H1 (cell line): ENCODE measurements at regions of chr10 and their contacts with region 1.

Region 1: DNA sequence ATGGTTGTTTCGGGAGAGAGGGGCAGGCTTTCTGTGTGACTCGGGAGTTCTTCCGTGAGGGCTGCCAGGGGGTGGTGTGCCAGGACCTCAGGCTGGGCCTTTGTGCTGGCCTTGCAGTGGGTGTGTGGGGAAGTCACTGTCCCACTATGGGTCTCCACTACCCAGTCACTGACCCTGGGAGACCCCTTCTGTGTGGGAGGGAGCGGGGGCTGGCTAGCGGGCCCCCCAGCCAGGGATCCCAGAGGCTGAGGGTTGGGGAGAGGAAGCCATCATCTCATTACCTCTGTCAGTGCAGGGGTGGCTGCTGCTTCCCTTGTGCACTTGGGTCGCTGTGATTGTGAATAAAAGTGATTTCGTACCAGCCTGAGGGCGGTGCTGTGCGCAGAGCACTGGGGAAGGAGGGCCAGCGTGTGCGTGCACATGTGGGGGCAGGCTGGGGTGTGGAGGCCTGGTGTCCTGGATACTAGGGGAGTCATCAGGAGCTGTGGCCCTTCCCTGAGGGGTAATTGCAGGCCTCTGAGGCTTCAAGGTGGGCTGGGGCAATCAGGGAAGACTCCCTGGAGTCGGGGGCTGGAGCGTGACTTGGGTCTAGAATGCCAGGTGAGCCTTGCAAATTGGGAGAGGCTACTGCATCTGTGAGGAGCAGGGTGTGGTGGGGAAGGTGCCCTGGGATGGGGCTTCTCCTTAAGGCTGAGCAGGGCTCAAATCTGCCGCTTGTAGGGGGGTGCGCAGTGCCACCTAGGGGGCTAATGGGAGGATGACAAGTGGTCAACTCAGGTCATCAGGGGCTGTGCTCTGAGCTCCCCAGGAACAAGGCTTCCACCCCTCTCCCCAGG is 98.9 kb downstream of the NEURL1 start:
- DNase-seq: peak; percentile 46 to 87
- H3K4me3 ChIP-seq: no peak overlapping the region
- H3K27ac ChIP-seq: no peak overlapping the region
- H3K4me1 ChIP-seq: peaks cover 0 to 2% (median 0%) of the 10 kb centered on the region in 4 experiments; a peak in 1 of 7 replicates
- H3K27me3 ChIP-seq: no peaks in the 10 kb centered on the region; a peak in 2 of 7 replicates
- CTCF ChIP-seq: peak; percentile 84 to 93 (median 88)
- EP300 ChIP-seq: no peak
- POLR2A ChIP-seq: no peak
- RAD21 ChIP-seq: peak; percentile 78 to 88

Region 2: DNA sequence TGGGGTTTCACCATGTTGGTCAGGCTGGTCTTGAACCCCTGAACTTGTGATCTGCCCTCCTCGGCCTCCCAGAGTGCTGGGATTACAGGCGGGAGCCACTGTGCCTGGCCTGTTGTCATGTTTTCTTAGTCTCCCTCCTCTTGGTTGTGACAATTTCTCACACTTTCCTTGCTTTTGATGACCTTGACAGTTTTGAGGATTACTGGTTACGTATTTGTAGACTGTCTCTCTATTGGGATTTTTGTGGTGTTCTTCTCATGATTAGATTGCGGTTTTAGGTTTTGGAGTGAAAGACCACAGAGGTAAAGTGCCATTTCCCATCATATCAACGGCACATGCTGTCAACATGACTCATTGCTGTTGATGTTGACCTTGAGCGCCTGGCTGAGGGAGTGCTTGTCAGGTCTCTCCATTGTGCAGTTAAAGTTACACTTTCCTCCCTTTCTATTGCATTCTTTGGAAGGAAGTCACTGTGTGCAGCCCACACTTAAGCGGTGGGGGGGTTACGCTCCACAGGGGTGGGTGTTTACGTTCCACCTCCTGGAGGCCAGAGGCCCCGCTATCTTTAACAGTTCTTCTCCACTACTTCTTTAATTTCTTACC is 88.1 kb before region 1 on chr10:
- CTCF ChIA-PET with region 1: interaction called, 13 read pairs
- POLR2A ChIA-PET with region 1: no interaction called
- DNase-seq: no peak
- H3K4me3 ChIP-seq: no peak overlapping the region
- H3K27ac ChIP-seq: no peak overlapping the region
- H3K4me1 ChIP-seq: no peaks in the 10 kb centered on the region; a peak in 2 of 7 replicates
- H3K27me3 ChIP-seq: no peaks in the 10 kb centered on the region
- CTCF ChIP-seq: no peak
- EP300 ChIP-seq: no peak
- POLR2A ChIP-seq: no peak
- RAD21 ChIP-seq: no peak

Region 3: GRCh38 chr10:103637927-103638557 is 45.6 kb after region 1 on chr10:
- CTCF ChIA-PET with region 1: interaction called, 11 read pairs
- POLR2A ChIA-PET with region 1: no interaction called
- DNase-seq: no peak
- H3K4me3 ChIP-seq: no peak overlapping the region
- H3K27ac ChIP-seq: no peak overlapping the region
- H3K4me1 ChIP-seq: peaks cover 8 to 35% (median 27%) of the 10 kb centered on the region in 4 experiments
- H3K27me3 ChIP-seq: no peaks in the 10 kb centered on the region
- CTCF ChIP-seq: no peak
- EP300 ChIP-seq: no peak
- POLR2A ChIP-seq: no peak
- RAD21 ChIP-seq: no peak

Region 4: DNA sequence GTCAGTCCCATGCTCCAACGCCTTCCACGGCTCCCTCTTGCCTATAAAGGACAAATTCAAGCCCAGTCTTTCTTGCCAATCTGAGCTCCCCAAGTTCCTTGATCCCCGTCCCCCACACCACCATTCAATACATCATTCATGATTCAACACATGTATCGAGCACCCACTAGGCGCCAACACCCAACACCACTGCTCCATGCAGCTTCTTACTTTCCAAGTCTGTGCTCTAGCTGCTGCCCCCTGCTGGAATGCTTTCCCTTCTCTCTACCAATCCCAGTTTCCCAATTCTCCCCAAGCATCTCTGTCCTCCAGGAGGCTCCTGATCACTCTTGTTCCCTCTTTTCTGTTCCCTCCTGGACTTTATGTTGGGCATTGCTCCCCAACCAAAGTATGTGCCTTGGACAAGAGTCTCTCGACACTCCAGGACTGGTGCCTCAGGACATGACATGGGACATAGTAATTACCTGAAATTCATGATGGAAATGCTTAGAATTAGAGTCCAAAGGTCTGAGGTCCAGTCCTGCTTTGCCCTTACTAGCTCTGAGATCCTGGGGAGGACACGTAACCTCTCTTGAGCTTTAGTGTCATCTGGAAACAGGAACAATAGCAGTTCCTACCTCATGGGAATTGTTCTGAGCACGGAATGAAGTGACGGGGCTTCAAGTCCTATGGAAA is 73.8 kb after region 1 on chr10:
- CTCF ChIA-PET with region 1: interaction called, 48 read pairs
- POLR2A ChIA-PET with region 1: no interaction called
- DNase-seq: peak in 1 of 2 experiments; percentile 76
- H3K4me3 ChIP-seq: no peak overlapping the region
- H3K27ac ChIP-seq: no peak overlapping the region
- H3K4me1 ChIP-seq: peaks cover 10 to 27% (median 17%) of the 10 kb centered on the region in 4 experiments
- H3K27me3 ChIP-seq: no peaks in the 10 kb centered on the region; a peak in 1 of 7 replicates
- CTCF ChIP-seq: peak; percentile 43 to 71 (median 64)
- EP300 ChIP-seq: no peak
- POLR2A ChIP-seq: no peak
- RAD21 ChIP-seq: peak; percentile 26 to 58; a peak in 3 of 4 replicates

Region 5: GRCh38 chr10:103703941-103704919 is 111.8 kb after region 1 on chr10:
- CTCF ChIA-PET with region 1: interaction called, 20 read pairs
- POLR2A ChIA-PET with region 1: no interaction called
- DNase-seq: no peak
- H3K4me3 ChIP-seq: no peak overlapping the region
- H3K27ac ChIP-seq: no peak overlapping the region
- H3K4me1 ChIP-seq: peaks cover 0 to 2% (median 0%) of the 10 kb centered on the region in 4 experiments; a peak in 2 of 7 replicates
- H3K27me3 ChIP-seq: no peaks in the 10 kb centered on the region
- CTCF ChIP-seq: no peak
- EP300 ChIP-seq: no peak
- POLR2A ChIP-seq: no peak
- RAD21 ChIP-seq: no peak